H1 (cell line): ENCODE measurements at regions of chr4 and their contacts with region 1.

Region 1: DNA sequence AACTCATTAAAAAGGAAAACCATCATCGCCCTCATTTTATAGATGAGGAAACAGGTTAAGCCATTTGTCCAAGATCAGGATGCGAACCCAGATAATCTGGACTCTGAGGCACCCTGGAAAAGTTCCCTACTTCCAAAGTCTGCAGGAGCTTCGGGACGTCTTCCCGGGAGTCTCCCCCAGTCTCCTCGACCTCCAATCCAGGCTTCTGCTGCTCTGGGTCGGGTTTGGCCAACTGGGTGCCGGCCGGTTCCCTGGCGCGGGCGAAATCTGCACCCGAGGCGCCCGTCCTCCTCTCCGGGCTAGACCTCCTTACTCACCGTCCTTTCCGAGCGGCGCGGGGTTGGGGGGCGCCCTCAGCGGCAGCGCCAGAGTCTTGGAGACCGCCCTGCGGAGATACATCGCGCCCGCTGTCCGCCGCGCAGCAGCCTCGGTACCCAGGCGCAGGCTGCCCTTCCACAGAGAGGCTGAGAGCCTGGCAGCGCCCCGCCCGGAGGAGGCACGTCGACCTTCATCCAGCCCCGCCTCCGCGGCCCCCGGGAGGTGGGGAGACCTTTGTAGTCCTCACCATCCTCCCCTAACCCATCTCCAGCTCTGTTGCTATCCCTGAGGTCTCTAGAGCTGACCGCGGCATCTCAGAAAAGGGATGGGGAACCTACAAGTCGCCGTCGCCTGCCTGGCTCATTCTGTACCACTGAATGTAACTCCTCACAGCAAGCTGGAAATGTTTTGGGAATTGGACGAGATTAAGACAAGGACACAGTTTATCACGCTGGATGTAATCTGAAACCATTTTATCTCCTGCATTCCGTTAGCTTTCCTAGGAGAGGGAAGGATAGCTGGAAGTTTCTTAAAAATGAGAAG is at the start of gene MGARP:
- DNase-seq: peak; percentile 50 to 88
- H3K4me3 ChIP-seq: peak within 1 kb of the TSS; percentile 49 to 65 (median 54)
- H3K27ac ChIP-seq: no peak within 1 kb of the TSS
- H3K4me1 ChIP-seq: peaks cover 2 to 5% (median 4%) of the 10 kb centered on the region in 4 experiments; a peak in 5 of 7 replicates
- H3K27me3 ChIP-seq: peaks cover 5 to 35% (median 25%) of the 10 kb centered on the region in 4 experiments
- CTCF ChIP-seq: no peak
- EP300 ChIP-seq: no peak
- POLR2A ChIP-seq: no peak
- RAD21 ChIP-seq: no peak; a peak in 1 of 4 replicates
- total RNA-seq, gene MGARP: 2.5 and 2.8 TPM in 2 replicates

Region 2: DNA sequence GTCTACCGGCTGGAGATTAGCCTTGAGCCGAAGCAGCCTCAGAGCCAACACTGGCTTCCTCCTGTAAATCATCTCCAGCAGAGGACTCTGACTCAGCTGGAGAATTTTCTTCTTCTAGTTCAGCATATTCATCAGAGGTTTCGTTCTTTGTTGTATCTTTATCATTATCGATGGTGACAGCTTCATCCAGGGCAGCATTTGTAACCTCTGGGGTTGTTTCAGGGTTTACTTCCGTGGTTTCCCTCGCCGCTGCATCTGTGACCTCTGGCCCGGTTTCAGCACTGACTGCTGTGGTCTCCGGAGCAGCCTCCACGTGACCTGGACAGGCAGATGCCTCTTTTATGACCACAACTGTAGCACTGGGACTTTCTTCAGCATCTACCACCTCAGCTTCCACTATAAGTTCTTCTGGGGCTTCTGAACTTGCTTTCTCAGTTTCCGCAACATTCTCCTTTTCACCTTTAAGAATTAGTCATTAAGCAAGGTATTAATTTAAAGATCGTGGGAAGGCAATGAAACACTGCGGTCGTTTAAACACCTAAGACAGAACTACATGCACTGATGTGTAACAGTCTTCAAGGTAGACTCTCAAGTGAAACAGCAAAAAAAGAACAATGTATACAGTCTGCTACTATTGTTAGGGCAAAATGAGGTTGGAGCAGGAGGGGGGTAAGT is 13.3 kb before region 1 on chr4:
- CTCF ChIA-PET with region 1: interaction called, 10 read pairs
- POLR2A ChIA-PET with region 1: no interaction called
- DNase-seq: no peak
- H3K4me3 ChIP-seq: no peak overlapping the region
- H3K27ac ChIP-seq: no peak overlapping the region
- H3K4me1 ChIP-seq: peaks cover 0 to 8% (median 2%) of the 10 kb centered on the region in 4 experiments; a peak in 4 of 7 replicates
- H3K27me3 ChIP-seq: no peaks in the 10 kb centered on the region
- CTCF ChIP-seq: no peak
- EP300 ChIP-seq: no peak
- POLR2A ChIP-seq: no peak
- RAD21 ChIP-seq: no peak

Region 3: GRCh38 chr4:139509727-139510410 is 229.9 kb after region 1 on chr4:
- CTCF ChIA-PET with region 1: no interaction called
- POLR2A ChIA-PET with region 1: no interaction called
- DNase-seq: no peak
- H3K4me3 ChIP-seq: no peak overlapping the region
- H3K27ac ChIP-seq: no peak overlapping the region
- H3K4me1 ChIP-seq: peaks cover 0 to 9% (median 2%) of the 10 kb centered on the region in 4 experiments; a peak in 3 of 7 replicates
- H3K27me3 ChIP-seq: no peaks in the 10 kb centered on the region
- CTCF ChIP-seq: peak; percentile 70 to 88 (median 80)
- EP300 ChIP-seq: no peak
- POLR2A ChIP-seq: no peak
- RAD21 ChIP-seq: peak; percentile 71 to 79